ENCODE measurements at regions of chr4 and their contacts with region 1.

Region 1: DNA sequence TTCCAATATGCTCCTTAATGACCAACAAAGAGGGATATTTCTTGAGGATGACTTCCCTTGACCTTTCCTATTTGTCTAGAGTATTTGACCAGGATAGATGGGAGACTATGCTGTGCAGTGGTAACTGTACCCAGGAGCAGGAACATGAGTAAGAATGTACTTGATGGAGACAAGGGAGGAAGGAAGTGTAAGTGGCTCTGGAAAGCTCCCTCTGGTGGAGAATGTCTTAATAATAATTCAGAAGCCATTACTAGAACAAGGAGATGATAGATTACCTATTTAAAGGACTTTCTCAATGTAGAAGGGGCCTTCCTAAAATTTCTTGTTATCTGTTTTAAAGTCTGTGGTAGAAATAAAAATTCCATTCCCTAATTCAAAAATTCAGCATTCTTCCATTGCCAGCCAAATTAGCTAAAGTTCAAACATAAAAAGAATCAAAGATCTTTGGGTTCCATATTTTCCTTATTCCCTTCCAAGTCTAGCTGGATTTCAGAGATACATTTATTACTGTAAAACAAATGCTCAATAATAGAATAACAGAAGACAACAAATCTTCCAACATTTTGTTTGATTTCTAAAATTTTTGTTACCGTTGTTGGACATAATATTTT is 83.8 kb downstream of the GRID2 start:
- DNase-seq: peak in 1 of 2 donors; percentile 3
- ATAC-seq: peak in 1 of 8 donors; percentile 68
- H3K4me3 ChIP-seq: no peak overlapping the region
- H3K27ac ChIP-seq: no peak overlapping the region
- H3K4me1 ChIP-seq: no peaks in the 10 kb centered on the region
- H3K27me3 ChIP-seq: no peaks in the 10 kb centered on the region
- CTCF ChIP-seq: peak; percentile 10 to 64 (median 57)

Region 2: DNA sequence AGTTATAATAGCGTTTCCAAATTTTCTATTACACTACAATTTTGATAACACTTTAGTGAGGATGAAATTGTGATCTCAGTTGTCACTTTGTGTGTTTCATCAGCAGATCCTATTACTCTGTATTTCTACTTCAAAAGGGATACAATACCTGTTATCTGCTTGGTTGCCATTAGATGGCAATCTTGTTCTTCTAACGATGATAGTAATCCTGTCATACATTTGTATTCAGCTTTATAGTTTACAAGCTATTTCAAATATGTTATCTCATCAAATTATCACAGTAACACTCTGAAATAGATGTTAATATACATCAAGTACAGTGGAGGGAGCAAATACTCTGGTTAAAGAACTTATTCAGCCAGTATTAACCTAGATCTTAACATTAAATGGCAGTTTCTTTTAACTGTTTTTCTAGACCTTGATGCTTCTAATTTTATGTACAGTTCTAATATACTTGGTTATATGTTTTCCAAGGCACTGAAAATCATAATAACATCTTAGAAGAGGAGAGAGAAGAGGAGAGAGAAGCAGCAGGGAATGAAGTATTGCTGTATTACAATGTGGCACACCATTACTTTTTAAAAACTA is 1968.3 kb before region 1 on chr4:
- intact Hi-C with region 1: loop called in 1 of 10 experiments (anchors 5 kb)
- DNase-seq: no peak
- ATAC-seq: no peak
- H3K4me3 ChIP-seq: no peak overlapping the region
- H3K27ac ChIP-seq: no peak overlapping the region
- H3K4me1 ChIP-seq: no peaks in the 10 kb centered on the region
- H3K27me3 ChIP-seq: no peaks in the 10 kb centered on the region
- CTCF ChIP-seq: peak in 7 of 9 donors; percentile 20 to 64 (median 56)

Region 3: GRCh38 chr4:91113130-91113706 is 1274.3 kb before region 1 on chr4:
- intact Hi-C with region 1: loop called in 5 of 10 experiments (anchors 5 to 10 kb)
- DNase-seq: no peak
- ATAC-seq: no peak
- H3K4me3 ChIP-seq: no peak overlapping the region
- H3K27ac ChIP-seq: no peak overlapping the region
- H3K4me1 ChIP-seq: peaks cover 0 to 4% (median 0%) of the 10 kb centered on the region in 9 donors
- H3K27me3 ChIP-seq: no peaks in the 10 kb centered on the region
- CTCF ChIP-seq: peak in 8 of 9 donors; percentile 33 to 70 (median 56)

Measured in heart right ventricle (tissue), 16 donors.